ENCODE measurements at regions of chr10 and their contacts with region 1.

Region 1: DNA sequence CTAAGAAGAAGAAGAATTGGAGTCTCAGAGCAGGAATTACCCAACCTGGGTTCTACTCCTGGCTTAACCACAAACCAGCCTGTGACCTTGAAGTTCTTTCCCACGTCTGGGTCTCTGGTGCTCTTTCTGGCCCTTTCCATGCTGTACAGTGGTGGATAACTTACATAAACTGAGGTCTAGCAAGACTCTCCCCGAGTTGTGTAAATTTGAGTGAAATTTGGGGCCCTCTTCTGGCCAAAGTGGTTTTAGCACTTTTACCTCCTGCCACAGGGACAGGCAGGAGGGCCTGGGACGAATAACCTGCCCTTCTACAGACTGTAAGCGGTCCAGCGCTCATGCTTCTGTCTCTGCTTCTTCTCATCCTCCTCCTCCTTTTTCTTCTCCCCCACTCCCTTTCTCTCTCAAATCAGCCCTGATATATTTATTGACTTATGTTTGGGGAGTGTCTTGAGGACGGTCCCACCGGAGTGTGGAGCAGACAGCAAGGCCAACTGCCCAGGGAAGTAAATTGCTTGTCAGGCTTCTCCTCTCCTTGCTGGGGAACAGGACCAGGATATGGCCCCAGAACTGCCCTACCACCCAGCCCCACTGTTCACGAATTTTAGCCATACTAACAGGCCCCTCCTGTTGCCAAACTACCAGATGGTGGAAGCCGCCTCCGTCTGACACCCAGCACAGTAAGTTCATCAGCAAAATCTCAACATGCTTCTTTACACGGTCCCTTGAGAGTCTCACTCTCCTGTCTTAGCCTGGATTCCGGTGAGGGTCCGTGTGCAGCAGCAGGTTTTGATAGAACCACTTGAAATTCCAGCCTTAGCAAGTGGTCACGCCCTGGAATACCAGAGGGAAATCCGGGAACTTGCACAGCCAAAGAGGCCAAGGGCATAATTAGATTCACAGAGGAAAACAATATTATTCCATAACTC is 4.0 kb upstream of the SH3PXD2A start:
- DNase-seq: peak; percentile 76
- ATAC-seq: peak; percentile 67
- H3K4me3 Mint-ChIP-seq: no peak overlapping the region
- H3K27ac Mint-ChIP-seq: peak overlapping the region; percentile 31
- H3K4me1 Mint-ChIP-seq: peaks cover 4% of the 10 kb centered on the region
- H3K27me3 Mint-ChIP-seq: peaks cover 32% of the 10 kb centered on the region

Region 2: DNA sequence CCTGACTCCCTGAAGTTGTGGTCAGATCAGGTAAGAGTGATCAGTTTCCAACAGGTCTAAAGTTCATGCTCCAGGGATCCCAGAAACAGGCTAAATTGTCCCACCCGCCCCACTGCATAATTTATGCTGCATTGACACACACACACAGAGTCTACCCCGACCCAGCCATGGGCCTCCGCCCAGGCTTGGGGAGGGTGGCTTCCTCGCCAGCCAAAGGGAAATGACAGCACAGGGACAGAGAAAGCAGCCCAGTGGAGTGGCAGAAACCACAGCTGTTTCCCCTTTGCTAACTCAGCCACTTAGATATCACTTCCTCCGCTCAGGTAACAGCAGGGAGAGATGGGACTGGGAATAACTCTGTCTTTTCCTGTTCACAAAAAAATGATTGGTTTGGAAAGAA is 13.5 kb before region 1 on chr10:
- CTCF ChIA-PET with region 1: interaction called, 15 read pairs
- POLR2A ChIA-PET with region 1: no interaction called
- DNase-seq: peak; percentile 62
- ATAC-seq: peak; percentile 88
- H3K4me3 Mint-ChIP-seq: peak overlapping the region; percentile 28
- H3K27ac Mint-ChIP-seq: peak overlapping the region; percentile 72
- H3K4me1 Mint-ChIP-seq: peaks cover 23% of the 10 kb centered on the region
- H3K27me3 Mint-ChIP-seq: peaks cover 15% of the 10 kb centered on the region

Region 3: GRCh38 chr10:103877861-103878260 is 18.4 kb after region 1 on chr10:
- CTCF ChIA-PET with region 1: no interaction called
- POLR2A ChIA-PET with region 1: no interaction called
- DNase-seq: no peak
- ATAC-seq: no peak
- H3K4me3 Mint-ChIP-seq: no peak overlapping the region
- H3K27ac Mint-ChIP-seq: no peak overlapping the region
- H3K4me1 Mint-ChIP-seq: no peaks in the 10 kb centered on the region
- H3K27me3 Mint-ChIP-seq: no peaks in the 10 kb centered on the region

Measured in activated CD8-positive, alpha-beta T cell treated with anti-CD3 and anti-CD28 coated beads, Interleukin-2, amount 10 ng/mL, durations not matched to agents 7 days and 5 days (primary cell).